Aorta (tissue), 5 donors: ENCODE measurements at regions of chr21 and their contacts with region 1.

Region 1: GRCh38 chr21:32463889-32464300 is 51.4 kb downstream of the EVA1C start:
- DNase-seq: no peak
- ATAC-seq: peak; percentile 69
- H3K4me3 ChIP-seq: no peak overlapping the region
- H3K27ac ChIP-seq: peak overlapping the region; percentile 51 to 91
- H3K4me1 ChIP-seq: peaks cover 0 to 5% of the 10 kb centered on the region in 2 donors
- H3K27me3 ChIP-seq: no peaks in the 10 kb centered on the region

Region 2: GRCh38 chr21:32412162-32413014 is 51.5 kb before region 1 on chr21 and contains the start of gene EVA1C:
- intact Hi-C with region 1: loop called (anchors 5 kb)
- DNase-seq: peak; percentile 72 to 90
- ATAC-seq: peak; percentile 82
- H3K4me3 ChIP-seq: peak within 1 kb of the TSS; percentile 67 to 84
- H3K27ac ChIP-seq: peak within 1 kb of the TSS; percentile 99 to 100
- H3K4me1 ChIP-seq: peaks cover 0 to 5% of the 10 kb centered on the region in 2 donors
- H3K27me3 ChIP-seq: no peaks in the 10 kb centered on the region
- total RNA-seq, gene EVA1C: 48.6 to 72.6 TPM

Region 3: GRCh38 chr21:32494934-32495703 is 31.2 kb after region 1 on chr21:
- intact Hi-C with region 1: loop called in 1 of 2 experiments (anchors 5 kb)
- DNase-seq: peak in 1 of 2 donors; percentile 55
- ATAC-seq: peak; percentile 48
- H3K4me3 ChIP-seq: no peak overlapping the region
- H3K27ac ChIP-seq: peak overlapping the region; percentile 16 to 89
- H3K4me1 ChIP-seq: peaks cover 0 to 6% of the 10 kb centered on the region in 2 donors
- H3K27me3 ChIP-seq: no peaks in the 10 kb centered on the region

Region 4: GRCh38 chr21:32569261-32570230 is 105.7 kb after region 1 on chr21:
- intact Hi-C with region 1: loop called in 1 of 2 experiments (anchors 2 kb)
- DNase-seq: peak; percentile 84 to 90
- ATAC-seq: peak; percentile 93
- H3K4me3 ChIP-seq: peak overlapping the region; percentile 24 to 67
- H3K27ac ChIP-seq: peak overlapping the region in 1 of 2 donors; percentile 76
- H3K4me1 ChIP-seq: peaks cover 4% of the 10 kb centered on the region in 2 donors
- H3K27me3 ChIP-seq: no peaks in the 10 kb centered on the region

Region 5: GRCh38 chr21:33109574-33110339 is 645.9 kb after region 1 on chr21:
- intact Hi-C with region 1: no loop called
- DNase-seq: peak in 1 of 2 donors; percentile 57
- ATAC-seq: no peak
- H3K4me3 ChIP-seq: no peak overlapping the region
- H3K27ac ChIP-seq: no peak overlapping the region
- H3K4me1 ChIP-seq: no peaks in the 10 kb centered on the region
- H3K27me3 ChIP-seq: peaks cover 2 to 3% of the 10 kb centered on the region in 2 donors